Heart left ventricle (tissue), 16 donors: ENCODE measurements at regions of chr6 and their contacts with region 1.

Region 1: GRCh38 chr6:2988426-2989331 is 11.0 kb upstream of the NQO2 start:
- DNase-seq: peak; percentile 93 to 96 (median 94)
- ATAC-seq: peak; percentile 80 to 93 (median 88)
- H3K4me3 ChIP-seq: peak overlapping the region; percentile 69 to 93 (median 80)
- H3K27ac ChIP-seq: peak overlapping the region; percentile 92 to 100 (median 99)
- H3K4me1 ChIP-seq: peaks cover 0 to 29% (median 18%) of the 10 kb centered on the region in 12 donors
- H3K27me3 ChIP-seq: no peaks in the 10 kb centered on the region
- CTCF ChIP-seq: peak; percentile 76 to 94 (median 88)
- POLR2A ChIP-seq: peak in 1 of 2 donors; percentile 84

Region 2: DNA sequence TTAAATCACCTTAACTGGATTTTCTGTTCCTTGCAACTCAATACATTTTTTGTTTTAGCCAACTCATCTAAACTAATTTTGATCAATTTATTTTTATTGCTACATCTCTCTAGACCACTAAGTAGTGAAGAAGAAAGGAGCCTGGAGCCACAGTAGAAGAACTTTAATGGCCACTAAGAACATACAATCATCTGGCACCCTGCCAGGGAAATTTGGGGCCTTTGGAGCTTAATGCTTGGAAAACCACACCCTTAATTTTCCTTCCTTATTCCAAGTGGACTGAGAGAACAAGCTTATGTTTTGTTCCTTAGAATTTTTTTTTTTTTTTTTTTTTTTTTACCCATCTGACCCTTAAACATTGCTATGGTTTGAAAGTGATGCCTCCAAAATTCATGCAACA is 731.3 kb before region 1 on chr6:
- intact Hi-C with region 1: no loop called
- DNase-seq: peak in 2 of 5 donors; percentile 21 to 38
- ATAC-seq: no peak
- H3K4me3 ChIP-seq: no peak overlapping the region
- H3K27ac ChIP-seq: no peak overlapping the region
- H3K4me1 ChIP-seq: no peaks in the 10 kb centered on the region
- H3K27me3 ChIP-seq: no peaks in the 10 kb centered on the region
- CTCF ChIP-seq: no peak
- POLR2A ChIP-seq: no peak

Region 3: GRCh38 chr6:2791124-2791974 is 197.3 kb before region 1 on chr6:
- intact Hi-C with region 1: loop called in 3 of 10 experiments (anchors 5 kb)
- DNase-seq: peak in 4 of 5 donors; percentile 68 to 78 (median 72)
- ATAC-seq: peak; percentile 82 to 91 (median 86)
- H3K4me3 ChIP-seq: peak overlapping the region in 2 of 12 donors; percentile 5 to 8
- H3K27ac ChIP-seq: peak overlapping the region; percentile 35 to 88 (median 68)
- H3K4me1 ChIP-seq: peaks cover 0 to 59% (median 25%) of the 10 kb centered on the region in 12 donors
- H3K27me3 ChIP-seq: no peaks in the 10 kb centered on the region
- CTCF ChIP-seq: peak; percentile 62 to 89 (median 72)
- POLR2A ChIP-seq: no peak

Region 4: DNA sequence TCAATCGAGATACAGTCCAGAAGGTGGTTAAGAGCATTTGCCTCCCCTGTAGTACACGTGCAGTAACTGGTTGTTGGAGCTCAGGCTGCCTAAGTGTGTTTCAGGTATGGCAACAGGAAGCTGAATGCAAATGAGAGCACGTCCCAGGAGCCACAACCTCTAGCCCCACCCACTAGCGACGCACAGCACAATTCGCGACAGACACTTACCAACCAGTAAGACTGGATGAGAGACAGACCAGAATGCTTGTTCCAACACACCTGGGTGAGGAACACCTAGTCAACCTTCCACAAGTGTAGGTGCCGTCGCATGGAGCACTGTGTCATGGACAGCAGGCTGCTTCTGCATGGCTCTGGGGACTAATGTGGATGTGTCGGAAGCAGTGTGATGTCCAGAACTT is 139.8 kb before region 1 on chr6:
- intact Hi-C with region 1: loop called (anchors 1 to 5 kb)
- DNase-seq: no peak
- ATAC-seq: no peak
- H3K4me3 ChIP-seq: no peak overlapping the region
- H3K27ac ChIP-seq: no peak overlapping the region
- H3K4me1 ChIP-seq: peaks cover 0 to 41% (median 22%) of the 10 kb centered on the region in 12 donors
- H3K27me3 ChIP-seq: no peaks in the 10 kb centered on the region
- CTCF ChIP-seq: no peak
- POLR2A ChIP-seq: no peak

Region 5: DNA sequence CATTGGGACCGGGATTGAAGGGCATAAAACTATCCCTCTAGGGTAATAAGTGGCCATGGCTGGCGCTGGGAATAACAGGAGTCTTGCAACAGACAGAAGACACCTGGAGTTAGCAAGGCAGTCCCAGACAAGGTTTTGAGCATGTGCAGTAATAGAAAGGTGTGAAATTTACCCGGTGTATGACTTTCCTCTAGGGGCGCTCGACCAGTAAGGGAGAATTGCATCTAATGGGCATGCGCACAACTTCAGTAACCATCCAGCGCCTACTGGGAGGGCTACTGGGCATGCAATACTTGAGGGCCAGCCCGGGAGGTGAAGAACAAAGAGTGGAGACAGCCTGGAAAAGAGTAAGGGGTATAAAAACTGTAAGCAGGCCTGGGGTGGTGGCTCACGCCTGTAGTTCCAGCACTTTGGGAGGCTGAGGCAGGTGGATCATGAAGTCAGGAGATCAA is 50.0 kb before region 1 on chr6:
- intact Hi-C with region 1: loop called in 6 of 10 experiments (anchors 5 to 10 kb)
- DNase-seq: no peak
- ATAC-seq: peak in 1 of 4 donors; percentile 2
- H3K4me3 ChIP-seq: no peak overlapping the region
- H3K27ac ChIP-seq: peak overlapping the region in 11 of 12 donors; percentile 35 to 80 (median 68)
- H3K4me1 ChIP-seq: peaks cover 0 to 30% (median 13%) of the 10 kb centered on the region in 12 donors
- H3K27me3 ChIP-seq: no peaks in the 10 kb centered on the region
- CTCF ChIP-seq: peak in 1 of 12 donors; percentile 7
- POLR2A ChIP-seq: no peak

Region 6: DNA sequence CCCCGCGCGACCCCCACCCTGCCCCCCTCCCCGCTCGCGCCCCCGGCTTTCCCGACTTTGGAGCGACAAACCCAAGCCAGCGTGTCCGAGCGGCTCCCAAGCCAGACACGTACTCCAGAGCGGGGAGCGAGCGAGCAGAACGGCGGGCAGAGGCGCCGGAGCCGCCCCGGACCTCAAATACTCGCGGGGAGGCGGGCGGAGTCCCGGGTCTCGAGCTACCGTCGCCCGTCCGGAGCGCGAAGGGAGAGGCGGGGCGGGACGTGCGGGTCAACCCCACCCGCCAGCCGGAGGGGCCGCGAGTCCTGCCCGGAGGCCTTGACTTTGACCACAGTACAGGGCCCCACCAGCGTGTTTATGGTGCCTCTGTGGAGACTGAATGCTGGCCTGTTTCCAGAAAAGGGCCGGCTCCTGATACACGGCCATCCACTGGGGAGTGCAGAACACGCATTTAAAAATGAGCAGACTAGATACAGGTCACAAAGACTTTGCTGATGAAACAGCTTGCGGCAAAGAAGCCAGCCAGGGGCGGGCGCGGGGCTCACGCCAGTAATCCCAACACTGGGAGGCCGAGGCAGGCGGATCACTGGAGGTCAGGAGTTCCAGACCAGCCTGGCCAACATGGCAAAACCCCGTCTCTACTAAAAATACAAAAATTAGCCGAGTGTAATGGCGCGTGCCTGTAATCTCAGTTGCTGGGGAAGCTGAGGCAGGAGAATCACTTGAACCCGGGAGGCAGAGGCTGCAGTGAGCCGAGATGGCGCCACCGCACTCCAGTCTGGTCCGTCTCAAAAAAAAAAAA is 17.1 kb before region 1 on chr6 and contains the start of gene SERPINB6:
- intact Hi-C with region 1: loop called in 5 of 10 experiments (anchors 1 to 2 kb)
- DNase-seq: peak; percentile 87 to 92 (median 89)
- ATAC-seq: peak; percentile 91 to 94 (median 92)
- H3K4me3 ChIP-seq: peak within 1 kb of the TSS; percentile 64 to 88 (median 74)
- H3K27ac ChIP-seq: peak within 1 kb of the TSS; percentile 85 to 100 (median 96)
- H3K4me1 ChIP-seq: peaks cover 0 to 30% (median 23%) of the 10 kb centered on the region in 12 donors
- H3K27me3 ChIP-seq: no peaks in the 10 kb centered on the region
- CTCF ChIP-seq: no peak
- POLR2A ChIP-seq: peak in 1 of 2 donors; percentile 29
- total RNA-seq, gene SERPINB6: 168 to 246 (median 188) TPM